ENCODE measurements at regions of chr1 and their contacts with region 1.

Region 1: DNA sequence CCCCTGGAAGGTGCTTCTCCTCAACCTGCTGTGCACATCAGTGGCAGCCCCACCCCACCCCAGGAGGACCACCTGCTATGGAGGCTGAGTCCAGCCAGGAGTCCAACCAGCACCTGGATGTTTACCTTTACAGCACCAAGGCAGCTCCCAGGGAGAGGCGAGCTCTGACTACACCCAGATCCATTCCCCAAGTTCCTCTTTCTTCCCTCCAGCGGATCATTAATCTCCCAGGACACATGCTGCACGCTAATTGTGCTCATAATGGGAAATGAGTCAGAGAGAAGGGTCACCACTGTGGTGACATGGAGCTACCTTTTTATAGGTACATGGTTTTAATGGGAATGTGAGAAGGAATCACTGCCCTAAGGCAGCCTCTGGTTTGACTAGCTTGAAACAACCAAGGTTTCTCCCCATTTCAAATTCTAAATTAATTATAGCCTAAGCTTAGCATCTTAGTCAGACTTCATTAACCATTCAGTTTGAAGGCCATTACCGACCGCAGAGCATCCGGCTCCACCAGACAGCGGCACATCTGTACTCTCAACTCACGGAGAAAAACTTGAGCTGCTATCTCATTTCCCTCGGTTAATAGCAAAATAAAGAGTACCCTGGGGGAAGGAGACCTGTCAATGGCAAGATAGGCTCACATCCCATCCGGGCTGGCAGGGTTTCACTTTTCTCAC is 173.1 kb upstream of the GALNT2 start:
- DNase-seq: no peak
- H3K4me3 ChIP-seq: no peak overlapping the region
- H3K27ac ChIP-seq: no peak overlapping the region
- H3K4me1 ChIP-seq: no peaks in the 10 kb centered on the region
- H3K27me3 ChIP-seq: peaks cover 0 to 6% of the 10 kb centered on the region in 2 donors
- CTCF ChIP-seq: no peak
- POLR2A ChIP-seq: no peak

Region 2: GRCh38 chr1:229461032-229461668 is 432.8 kb before region 1 on chr1:
- intact Hi-C with region 1: no loop called
- DNase-seq: no peak
- H3K4me3 ChIP-seq: no peak overlapping the region
- H3K27ac ChIP-seq: no peak overlapping the region
- H3K4me1 ChIP-seq: no peaks in the 10 kb centered on the region
- H3K27me3 ChIP-seq: no peaks in the 10 kb centered on the region
- CTCF ChIP-seq: no peak
- POLR2A ChIP-seq: no peak

Region 3: GRCh38 chr1:231084353-231084752 is 1190.5 kb after region 1 on chr1:
- intact Hi-C with region 1: loop called (anchors 10 kb)
- DNase-seq: no peak
- H3K4me3 ChIP-seq: no peak overlapping the region
- H3K27ac ChIP-seq: no peak overlapping the region
- H3K4me1 ChIP-seq: no peaks in the 10 kb centered on the region
- H3K27me3 ChIP-seq: no peaks in the 10 kb centered on the region
- CTCF ChIP-seq: no peak
- POLR2A ChIP-seq: no peak

Measured in breast epithelium (tissue), 4 donors.